Panc1 (cell line): ENCODE measurements at regions of chr20 and their contacts with region 1.

Region 1: GRCh38 chr20:9270831-9271230 is 201.9 kb downstream of the PLCB4 start:
- DNase-seq: no peak
- ATAC-seq: no peak
- H3K4me3 ChIP-seq: no peak overlapping the region
- H3K27ac ChIP-seq: no peak overlapping the region
- H3K4me1 ChIP-seq: no peaks in the 10 kb centered on the region
- H3K27me3 ChIP-seq: no peaks in the 10 kb centered on the region
- CTCF ChIP-seq: no peak

Region 2: GRCh38 chr20:9021701-9022103 is 249.1 kb before region 1 on chr20:
- CTCF ChIA-PET with region 1: no interaction called
- POLR2A ChIA-PET with region 1: no interaction called
- in situ Hi-C with region 1: no loop called
- intact Hi-C with region 1: no loop called
- DNase-seq: no peak
- ATAC-seq: no peak
- H3K4me3 ChIP-seq: no peak overlapping the region
- H3K27ac ChIP-seq: no peak overlapping the region
- H3K4me1 ChIP-seq: no peaks in the 10 kb centered on the region; the same call in 1 of the 2 replicates
- H3K27me3 ChIP-seq: no peaks in the 10 kb centered on the region
- CTCF ChIP-seq: no peak

Region 3: DNA sequence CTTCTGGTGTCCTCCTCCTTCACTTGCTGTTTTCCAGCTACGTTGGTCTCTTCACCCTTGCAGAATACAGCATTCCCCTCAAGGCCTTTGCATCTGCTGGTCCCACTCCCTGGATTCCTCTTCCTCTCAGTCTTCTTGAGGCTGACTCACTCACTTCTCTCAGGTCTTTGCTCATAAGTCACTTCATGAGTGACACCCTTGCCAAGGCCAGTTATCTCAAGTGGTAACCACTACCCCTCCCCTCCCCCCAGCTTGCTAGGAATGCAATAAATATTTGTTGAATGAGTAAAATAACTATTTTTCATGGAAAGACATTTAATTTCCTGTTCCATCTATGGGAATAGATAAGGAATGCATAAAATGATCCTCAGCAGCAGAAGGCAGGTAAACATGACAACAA is 70.2 kb before region 1 on chr20:
- CTCF ChIA-PET with region 1: no interaction called
- POLR2A ChIA-PET with region 1: no interaction called
- in situ Hi-C with region 1: no loop called
- intact Hi-C with region 1: no loop called
- DNase-seq: no peak
- ATAC-seq: no peak
- H3K4me3 ChIP-seq: no peak overlapping the region
- H3K27ac ChIP-seq: no peak overlapping the region
- H3K4me1 ChIP-seq: no peaks in the 10 kb centered on the region
- H3K27me3 ChIP-seq: no peaks in the 10 kb centered on the region
- CTCF ChIP-seq: no peak

Region 4: GRCh38 chr20:9215539-9215938 is 55.3 kb before region 1 on chr20:
- CTCF ChIA-PET with region 1: no interaction called
- POLR2A ChIA-PET with region 1: no interaction called
- in situ Hi-C with region 1: no loop called
- intact Hi-C with region 1: loop called (anchors 10 kb)
- DNase-seq: no peak
- ATAC-seq: no peak
- H3K4me3 ChIP-seq: no peak overlapping the region
- H3K27ac ChIP-seq: no peak overlapping the region
- H3K4me1 ChIP-seq: no peaks in the 10 kb centered on the region
- H3K27me3 ChIP-seq: no peaks in the 10 kb centered on the region
- CTCF ChIP-seq: peak; percentile 15; the same call in 1 of the 2 replicates